ENCODE measurements at regions of chr19 and their contacts with region 1.

Region 1: DNA sequence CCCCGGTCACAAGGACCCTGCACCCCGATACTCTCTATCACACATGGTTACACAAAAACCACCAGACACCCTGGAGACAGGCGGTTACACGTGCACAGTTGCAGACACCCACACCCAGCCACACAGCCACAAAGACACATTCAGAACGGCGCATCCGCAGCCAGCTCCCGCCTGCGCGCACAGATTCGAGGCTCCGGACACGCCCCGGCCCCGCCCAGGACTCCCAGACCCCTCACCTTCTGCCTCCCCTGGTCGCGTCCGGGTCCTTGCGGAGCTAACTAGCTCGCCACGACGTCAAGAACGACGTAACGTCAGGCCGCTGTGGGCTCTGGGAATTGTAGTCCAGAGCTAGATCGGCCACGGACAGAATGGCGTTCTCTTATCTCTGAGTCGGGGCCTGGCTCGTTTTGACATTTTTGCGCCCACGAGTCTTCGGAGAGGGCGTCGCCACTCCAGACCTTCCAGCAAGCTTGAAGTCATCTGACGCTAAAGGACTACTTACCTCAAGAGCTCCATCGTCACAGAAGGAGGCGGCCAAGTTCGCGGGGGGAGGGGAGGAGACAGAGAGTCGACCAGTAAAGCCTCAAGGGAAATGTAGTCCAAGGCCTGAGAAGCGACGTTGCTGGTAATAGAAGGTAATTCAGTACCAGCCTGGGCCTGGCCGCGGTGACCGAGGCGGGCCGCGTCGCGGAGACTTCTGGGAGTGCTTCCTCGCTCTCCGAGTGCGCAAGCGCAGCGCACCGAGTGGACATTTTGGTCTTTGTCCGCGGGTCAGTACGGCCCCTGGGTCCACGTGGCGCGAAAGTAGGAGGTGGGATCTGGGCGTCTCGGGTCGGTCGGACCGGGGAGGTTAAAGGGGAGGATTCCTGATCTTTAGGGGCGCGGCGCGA is at the starts of genes ZNF146 and ZNF565:
- DNase-seq: peak; percentile 96 to 99
- H3K4me3 ChIP-seq: peak within 1 kb of the TSS; percentile 81
- H3K27ac ChIP-seq: peak within 1 kb of the TSS; percentile 92 to 96
- H3K4me1 ChIP-seq: peaks cover 0 to 12% of the 10 kb centered on the region in 2 donors
- H3K27me3 ChIP-seq: no peaks in the 10 kb centered on the region
- CTCF ChIP-seq: no peak
- total RNA-seq, gene ZNF146: 21.2 TPM
- total RNA-seq, gene ZNF565: 1.9 TPM

Region 2: DNA sequence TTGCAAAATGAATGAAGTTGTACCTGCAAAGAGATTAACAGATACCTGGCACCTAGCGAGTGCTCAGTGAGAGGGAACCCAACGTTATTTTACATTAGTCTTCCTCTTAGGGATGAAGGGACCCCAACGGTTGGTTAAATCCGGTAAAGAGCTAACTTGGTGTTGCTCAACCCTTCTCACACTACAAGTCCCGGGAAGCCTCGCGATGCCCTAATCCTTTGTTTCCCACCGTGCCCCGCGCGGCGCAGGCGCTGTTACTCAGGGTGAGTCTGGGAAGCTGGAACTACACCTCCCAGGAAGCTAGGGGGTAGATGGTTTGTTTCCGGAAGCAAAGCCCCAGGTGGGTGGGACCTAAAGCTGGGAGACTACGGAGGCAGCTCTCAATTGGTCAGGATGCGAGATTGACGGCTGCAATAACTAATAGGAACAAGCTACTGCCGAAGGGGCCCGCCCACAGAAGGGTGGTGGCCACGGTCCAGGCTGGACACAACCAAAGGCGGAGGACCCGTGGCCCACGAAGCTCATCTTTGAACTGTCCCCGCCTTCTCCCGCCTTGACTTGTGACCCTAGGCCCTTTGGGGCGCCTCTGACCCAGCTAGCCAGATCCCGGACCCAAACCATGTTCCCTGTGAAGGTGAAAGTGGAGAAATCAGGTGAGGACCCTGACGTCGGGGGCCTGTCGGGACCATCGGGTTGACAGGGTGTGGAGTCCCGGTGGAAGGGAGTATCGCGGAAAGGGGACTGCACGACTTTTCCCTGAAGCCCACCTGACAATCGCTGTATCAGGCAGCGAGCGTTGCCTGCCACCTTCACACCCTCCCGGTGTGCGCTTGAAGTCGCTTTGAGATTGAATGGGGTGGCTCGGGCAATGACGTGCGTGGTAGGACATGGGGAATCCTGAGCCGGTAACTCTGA is 466.3 kb before region 1 on chr19 and contains the start of gene LIN37:
- intact Hi-C with region 1: loop called (anchors 2 kb)
- DNase-seq: peak; percentile 99 to 100
- H3K4me3 ChIP-seq: peak within 1 kb of the TSS; percentile 82 to 91
- H3K27ac ChIP-seq: peak within 1 kb of the TSS; percentile 75 to 84
- H3K4me1 ChIP-seq: peaks cover 5 to 26% of the 10 kb centered on the region in 2 donors
- H3K27me3 ChIP-seq: no peaks in the 10 kb centered on the region
- CTCF ChIP-seq: no peak
- total RNA-seq, gene LIN37: 29.9 TPM

Region 3: GRCh38 chr19:36139473-36140303 is 74.9 kb before region 1 on chr19 and contains the start of gene CAPNS1:
- intact Hi-C with region 1: loop called (anchors 1 kb)
- DNase-seq: peak; percentile 85 to 99
- H3K4me3 ChIP-seq: peak within 1 kb of the TSS; percentile 80 to 82
- H3K27ac ChIP-seq: peak within 1 kb of the TSS; percentile 96 to 97
- H3K4me1 ChIP-seq: peaks cover 6 to 19% of the 10 kb centered on the region in 2 donors
- H3K27me3 ChIP-seq: no peaks in the 10 kb centered on the region
- CTCF ChIP-seq: peak in 1 of 3 experiments; percentile 11
- total RNA-seq, gene CAPNS1: 168 TPM

Region 4: DNA sequence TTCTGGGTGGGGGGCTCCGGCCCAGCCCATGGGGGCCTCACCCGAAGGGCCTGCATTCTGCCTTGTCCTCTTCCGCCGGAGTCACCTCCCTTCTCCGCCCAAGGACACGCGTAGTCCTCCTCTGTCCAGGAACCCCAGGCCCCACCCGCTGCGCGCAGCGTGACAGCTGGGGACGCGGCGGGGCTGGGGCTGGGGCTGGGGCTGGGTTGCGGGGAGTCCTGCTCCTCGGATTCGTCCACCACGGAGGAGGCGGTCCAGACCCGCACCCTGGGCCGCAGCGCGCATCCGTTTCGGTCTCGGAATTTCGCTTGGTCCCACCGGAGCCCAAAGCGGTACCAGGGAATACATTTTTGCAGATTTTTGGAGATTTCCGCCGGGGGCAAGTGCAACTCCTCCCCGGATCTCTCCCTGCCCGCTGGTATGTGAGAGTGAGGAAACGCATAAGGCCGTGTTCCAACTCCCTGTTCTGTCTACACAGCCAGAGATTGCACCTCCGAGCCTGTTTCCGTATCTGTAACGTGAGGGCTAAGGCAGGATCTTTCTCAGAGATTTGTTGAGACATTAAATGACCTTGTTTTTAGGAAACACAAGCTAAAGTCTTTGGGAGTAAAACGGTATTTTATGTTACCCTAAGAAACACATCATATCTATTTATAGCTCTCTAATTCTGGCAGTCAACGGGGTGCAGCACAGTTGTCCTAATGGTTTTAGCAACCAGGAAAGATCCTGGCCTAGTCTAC is 62.1 kb before region 1 on chr19 and contains the start of gene COX7A1:
- intact Hi-C with region 1: loop called (anchors 2 kb)
- DNase-seq: peak; percentile 59 to 85
- H3K4me3 ChIP-seq: peak within 1 kb of the TSS; percentile 74 to 96
- H3K27ac ChIP-seq: peak within 1 kb of the TSS; percentile 99 to 100
- H3K4me1 ChIP-seq: peaks cover 4 to 17% of the 10 kb centered on the region in 2 donors
- H3K27me3 ChIP-seq: no peaks in the 10 kb centered on the region
- CTCF ChIP-seq: no peak
- total RNA-seq, gene COX7A1: 51.2 TPM

Region 5: DNA sequence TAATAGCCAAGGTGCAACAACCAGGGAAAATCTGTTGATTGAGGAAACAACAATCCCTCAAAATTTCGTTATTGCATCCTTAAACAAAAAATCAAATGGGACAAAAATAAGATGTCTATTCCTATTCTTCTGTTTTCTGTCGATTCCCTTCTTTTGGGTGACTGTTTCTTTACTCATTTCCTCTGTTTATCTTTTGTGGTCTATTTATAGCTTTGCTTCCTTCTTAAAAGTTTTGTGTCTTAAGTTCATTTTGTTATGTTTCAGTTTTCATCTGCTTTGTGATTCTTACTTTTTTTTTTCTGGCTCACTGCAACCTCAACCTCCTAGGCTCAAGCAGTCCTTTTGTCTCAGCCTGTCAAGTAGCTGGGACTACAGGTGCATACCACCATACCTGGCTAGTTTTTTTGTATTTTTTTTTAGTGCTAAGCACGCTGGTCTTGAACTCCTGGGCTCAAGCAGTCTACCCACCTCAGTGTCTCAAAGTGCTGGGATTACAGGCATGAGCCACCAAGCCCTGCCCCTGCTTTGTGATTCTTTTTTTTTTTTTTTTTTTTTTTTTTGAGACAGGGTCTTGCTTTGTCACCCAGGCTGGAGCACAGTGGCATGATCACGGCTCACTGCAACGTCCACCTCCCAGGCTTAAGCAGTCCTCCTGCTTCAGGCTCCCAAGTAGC is 10.7 kb after region 1 on chr19:
- intact Hi-C with region 1: no loop called
- DNase-seq: no peak
- H3K4me3 ChIP-seq: no peak overlapping the region
- H3K27ac ChIP-seq: peak overlapping the region; percentile 2 to 23
- H3K4me1 ChIP-seq: peaks cover 0 to 5% of the 10 kb centered on the region in 2 donors
- H3K27me3 ChIP-seq: no peaks in the 10 kb centered on the region
- CTCF ChIP-seq: no peak

Region 6: GRCh38 chr19:36378625-36379509 is 164.2 kb after region 1 on chr19 and contains the start of gene ZFP14:
- intact Hi-C with region 1: loop called (anchors 5 kb)
- DNase-seq: peak; percentile 77 to 95
- H3K4me3 ChIP-seq: peak within 1 kb of the TSS; percentile 66 to 92
- H3K27ac ChIP-seq: peak within 1 kb of the TSS; percentile 67 to 89
- H3K4me1 ChIP-seq: peaks cover 3 to 8% of the 10 kb centered on the region in 2 donors
- H3K27me3 ChIP-seq: no peaks in the 10 kb centered on the region
- CTCF ChIP-seq: no peak
- total RNA-seq, gene ZFP14: 1.2 TPM